ENCODE measurements at regions of chr20 and their contacts with region 1.

Region 1: GRCh38 chr20:32516583-32517517 is 68.3 kb downstream of the NOL4L start:
- DNase-seq: no peak
- H3K4me3 ChIP-seq: no peak overlapping the region
- H3K27ac ChIP-seq: no peak overlapping the region
- H3K4me1 ChIP-seq: peaks cover 9% of the 10 kb centered on the region
- H3K27me3 ChIP-seq: no peaks in the 10 kb centered on the region
- CTCF ChIP-seq: no peak

Region 2: GRCh38 chr20:32465092-32465900 is 51.6 kb before region 1 on chr20:
- CTCF ChIA-PET with region 1: no interaction called
- dilution Hi-C with region 1: loop called (anchors 5 kb)
- in situ Hi-C with region 1: no loop called
- intact Hi-C with region 1: no loop called
- DNase-seq: peak; percentile 24
- H3K4me3 ChIP-seq: no peak overlapping the region
- H3K27ac ChIP-seq: no peak overlapping the region
- H3K4me1 ChIP-seq: peaks cover 4% of the 10 kb centered on the region
- H3K27me3 ChIP-seq: no peaks in the 10 kb centered on the region
- CTCF ChIP-seq: no peak

Region 3: DNA sequence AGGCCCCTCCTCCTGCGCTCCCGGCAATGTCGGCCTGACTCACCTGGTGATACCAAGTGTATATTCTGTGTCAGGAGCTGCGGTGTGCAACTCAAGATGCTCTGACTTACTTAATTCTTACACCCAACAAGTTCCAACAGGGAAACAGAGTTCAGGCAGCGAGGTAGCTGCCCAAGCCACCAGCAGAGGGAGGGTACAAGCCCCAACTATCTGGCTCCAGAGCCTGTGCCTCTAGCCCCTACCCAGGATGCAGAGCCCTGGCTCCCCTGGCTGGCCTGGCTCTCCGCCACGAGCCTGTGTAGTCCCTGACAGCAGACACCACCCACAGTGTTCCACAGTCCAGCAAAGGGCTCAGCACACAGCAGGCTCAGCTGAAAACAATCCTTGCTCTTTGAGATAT is 122.0 kb after region 1 on chr20:
- CTCF ChIA-PET with region 1: no interaction called
- dilution Hi-C with region 1: no loop called
- in situ Hi-C with region 1: loop called in 1 of 2 experiments (anchors 5 kb)
- intact Hi-C with region 1: no loop called
- DNase-seq: peak; percentile 91
- H3K4me3 ChIP-seq: no peak overlapping the region
- H3K27ac ChIP-seq: no peak overlapping the region
- H3K4me1 ChIP-seq: peaks cover 13% of the 10 kb centered on the region
- H3K27me3 ChIP-seq: no peaks in the 10 kb centered on the region
- CTCF ChIP-seq: peak; percentile 39 to 73

Measured in mammary epithelial cell (primary cell).